ENCODE measurements at regions of chr16 and their contacts with region 1.

Region 1: DNA sequence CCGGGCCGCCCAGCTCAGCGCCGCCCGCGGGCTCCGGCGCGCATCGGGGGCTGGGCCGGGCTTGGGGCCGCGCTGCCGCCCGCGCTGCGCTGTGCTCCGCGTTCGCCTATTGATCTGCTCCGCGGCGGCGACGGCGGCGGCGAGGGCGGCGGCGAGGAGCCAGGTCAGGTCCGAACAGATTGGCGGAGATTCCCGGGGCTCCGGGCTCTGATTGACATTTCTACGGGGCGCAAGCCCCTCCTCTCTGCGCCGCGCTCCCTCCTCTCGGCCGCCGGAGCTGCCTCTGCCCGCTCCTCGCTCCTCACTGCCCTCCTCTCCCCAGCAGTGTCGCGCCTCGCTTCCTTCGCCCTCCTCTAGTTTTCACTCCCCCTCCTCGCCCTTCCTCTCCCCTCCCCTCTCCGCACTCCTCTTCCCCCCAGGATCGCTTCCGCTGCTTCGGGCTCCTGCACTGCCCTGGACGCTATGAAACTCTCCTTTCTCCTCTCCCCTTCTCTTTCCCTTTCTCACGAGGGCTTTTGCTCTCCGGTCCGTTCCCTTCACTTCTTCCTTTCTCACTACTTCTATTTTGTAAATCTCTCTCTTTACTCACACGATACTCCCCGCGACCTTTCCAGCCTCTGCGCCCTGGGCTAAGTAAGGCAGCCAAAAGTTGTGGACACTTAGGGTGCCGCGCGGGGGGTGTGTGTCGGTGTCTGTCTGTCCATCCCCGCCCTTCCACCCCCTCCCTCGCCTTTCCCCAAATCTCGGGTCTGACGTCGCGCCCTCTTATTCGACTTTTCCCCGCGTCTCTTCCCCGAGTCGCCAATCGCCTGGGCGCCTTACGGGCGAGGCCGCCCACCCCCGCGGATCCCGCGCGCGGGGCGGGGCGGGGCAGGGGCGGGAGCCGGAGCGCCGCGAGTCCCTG is at the start of gene IRX3:
- DNase-seq: peak in 1 of 2 donors; percentile 83
- H3K4me3 ChIP-seq: peak within 1 kb of the TSS; percentile 64 to 73
- H3K27ac ChIP-seq: peak within 1 kb of the TSS; percentile 35 to 59
- H3K4me1 ChIP-seq: peaks cover 16 to 34% of the 10 kb centered on the region in 2 donors
- H3K27me3 ChIP-seq: peaks cover 27% of the 10 kb centered on the region
- CTCF ChIP-seq: no peak
- total RNA-seq, gene IRX3: 0.11 TPM

Region 2: DNA sequence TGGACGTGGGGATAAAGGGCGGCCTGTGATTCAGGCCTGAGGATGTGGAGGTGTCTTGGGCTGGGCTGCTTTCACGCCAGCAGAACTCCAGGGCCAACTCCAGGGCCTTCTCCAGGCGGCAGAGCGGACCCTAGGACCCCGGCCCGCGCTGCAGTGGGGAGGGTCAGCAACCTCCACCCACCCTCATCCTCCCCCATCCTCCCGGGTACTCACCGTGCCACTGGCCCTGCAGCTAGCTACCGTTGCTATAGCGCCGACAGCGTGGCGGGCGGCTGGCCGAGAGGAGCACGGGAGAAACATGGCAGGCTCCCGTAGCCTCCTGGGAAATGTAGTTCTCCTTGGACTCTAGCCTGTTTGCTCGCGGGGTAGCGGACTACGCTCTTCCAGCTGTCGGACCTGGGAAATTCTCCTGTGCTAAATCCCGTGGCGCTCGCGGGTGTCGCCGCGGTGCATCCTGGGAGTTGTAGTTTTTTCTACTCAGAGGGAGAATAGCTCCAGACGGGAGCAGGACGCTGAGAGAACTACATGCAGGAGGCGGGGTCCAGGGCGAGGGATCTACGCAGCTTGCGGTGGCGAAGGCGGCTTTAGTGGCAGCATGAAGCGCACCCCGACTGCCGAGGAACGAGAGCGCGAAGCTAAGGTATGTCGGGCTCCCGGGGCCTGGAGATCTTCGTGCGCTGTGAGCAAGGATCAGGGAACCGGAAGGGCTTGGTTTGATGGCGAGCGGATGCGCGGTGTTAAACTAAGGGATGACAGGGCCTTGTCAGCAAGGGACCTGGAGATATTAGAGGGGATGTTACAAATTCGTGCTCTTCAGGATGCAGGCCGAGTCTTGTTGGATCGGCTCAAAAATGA is 582.5 kb before region 1 on chr16 and contains the starts of genes FTO and RPGRIP1L:
- intact Hi-C with region 1: loop called (anchors 10 kb)
- DNase-seq: peak; percentile 98 to 100
- H3K4me3 ChIP-seq: peak within 1 kb of the TSS; percentile 75 to 84
- H3K27ac ChIP-seq: peak within 1 kb of the TSS; percentile 58 to 70
- H3K4me1 ChIP-seq: peaks cover 0 to 3% of the 10 kb centered on the region in 2 donors
- H3K27me3 ChIP-seq: no peaks in the 10 kb centered on the region
- CTCF ChIP-seq: peak in 1 of 3 experiments; percentile 14
- total RNA-seq, gene FTO: 50.2 TPM
- total RNA-seq, gene RPGRIP1L: 0.96 TPM

Region 3: GRCh38 chr16:53773150-53773846 is 513.0 kb before region 1 on chr16:
- intact Hi-C with region 1: loop called (anchors 10 kb)
- DNase-seq: no peak
- H3K4me3 ChIP-seq: no peak overlapping the region
- H3K27ac ChIP-seq: no peak overlapping the region
- H3K4me1 ChIP-seq: peaks cover 5 to 53% of the 10 kb centered on the region in 2 donors
- H3K27me3 ChIP-seq: no peaks in the 10 kb centered on the region
- CTCF ChIP-seq: peak; percentile 9 to 64 (median 46)

Region 4: DNA sequence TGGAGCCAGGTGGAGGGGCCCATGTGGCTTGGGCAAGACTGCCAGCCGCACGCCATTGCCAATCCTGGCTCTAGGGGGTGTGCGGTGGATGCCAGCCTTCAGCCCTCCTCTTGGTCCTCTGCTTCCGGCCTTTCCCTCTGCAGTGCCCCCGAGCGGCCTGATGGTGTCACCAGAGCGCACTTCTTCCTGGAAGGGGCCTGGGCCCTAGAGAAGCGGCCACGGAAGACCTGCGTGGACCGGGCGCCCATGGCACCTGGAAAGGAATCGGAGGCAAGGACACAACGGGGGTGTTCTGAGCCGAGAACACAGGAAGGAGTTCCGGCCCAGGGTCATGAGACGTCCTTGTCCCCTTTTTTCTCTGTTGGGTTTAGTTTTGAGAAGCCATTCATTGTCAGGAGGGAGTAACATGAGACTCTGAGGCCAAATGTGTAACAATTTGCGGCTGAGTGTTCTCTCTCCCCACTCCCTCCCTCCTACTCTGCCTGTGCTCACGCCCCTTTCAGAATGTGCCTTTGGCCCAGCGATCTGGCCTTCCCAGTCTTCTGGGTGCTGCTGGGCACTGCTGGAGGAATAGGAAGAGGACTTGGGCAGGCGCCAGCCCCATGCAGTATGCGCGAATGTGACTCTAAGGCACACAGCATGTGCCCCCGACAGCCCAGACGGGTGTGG is 92.5 kb before region 1 on chr16:
- intact Hi-C with region 1: loop called (anchors 5 kb)
- DNase-seq: peak in 1 of 2 donors; percentile 85
- H3K4me3 ChIP-seq: peak overlapping the region; percentile 25 to 59
- H3K27ac ChIP-seq: peak overlapping the region; percentile 54 to 66
- H3K4me1 ChIP-seq: no peaks in the 10 kb centered on the region
- H3K27me3 ChIP-seq: no peaks in the 10 kb centered on the region
- CTCF ChIP-seq: peak; percentile 41 to 91 (median 80)

Region 5: GRCh38 chr16:54266363-54266955 is 19.9 kb before region 1 on chr16:
- intact Hi-C with region 1: no loop called
- DNase-seq: peak in 1 of 2 donors; percentile 19
- H3K4me3 ChIP-seq: no peak overlapping the region
- H3K27ac ChIP-seq: no peak overlapping the region
- H3K4me1 ChIP-seq: no peaks in the 10 kb centered on the region
- H3K27me3 ChIP-seq: no peaks in the 10 kb centered on the region
- CTCF ChIP-seq: no peak

Region 6: GRCh38 chr16:55370762-55371482 is 1084.6 kb after region 1 on chr16:
- intact Hi-C with region 1: loop called (anchors 5 kb)
- DNase-seq: peak in 1 of 2 donors; percentile 79
- H3K4me3 ChIP-seq: peak overlapping the region in 1 of 2 donors; percentile 30
- H3K27ac ChIP-seq: no peak overlapping the region
- H3K4me1 ChIP-seq: peaks cover 0 to 19% of the 10 kb centered on the region in 2 donors
- H3K27me3 ChIP-seq: no peaks in the 10 kb centered on the region
- CTCF ChIP-seq: peak in 2 of 3 experiments; percentile 45 to 60

Measured in ascending aorta (tissue), 2 donors.